Calu3 (cell line): ENCODE measurements at regions of chr6 and their contacts with region 1.

Region 1: DNA sequence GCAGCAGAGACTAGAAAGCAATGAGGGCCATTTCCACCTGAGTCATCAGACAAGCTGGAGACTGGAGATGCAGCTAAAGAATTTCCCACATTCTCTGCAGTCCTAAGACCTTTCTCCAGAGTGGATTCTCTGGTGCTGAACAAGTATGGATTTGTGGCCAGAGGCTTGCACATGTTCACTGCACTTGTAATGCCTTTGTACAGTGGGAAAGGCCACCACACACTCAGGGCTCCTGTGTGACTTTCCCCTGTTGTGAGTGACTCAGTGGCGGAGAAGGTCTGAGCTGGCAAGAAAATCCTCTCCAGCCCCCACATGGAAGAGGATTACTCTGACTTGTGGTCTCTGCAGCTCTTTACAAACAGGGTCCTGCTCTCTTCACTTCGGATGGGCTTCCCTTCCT is 192.3 kb downstream of the C6orf118 start:
- DNase-seq: no peak
- H3K4me3 Mint-ChIP-seq: no peak overlapping the region
- H3K27ac Mint-ChIP-seq: no peak overlapping the region
- H3K4me1 Mint-ChIP-seq: peaks cover 19% of the 10 kb centered on the region
- H3K27me3 Mint-ChIP-seq: no peaks in the 10 kb centered on the region
- CTCF ChIP-seq: no peak

Region 2: GRCh38 chr6:164856138-164856537 is 261.0 kb before region 1 on chr6:
- CTCF ChIA-PET with region 1: no interaction called
- intact Hi-C with region 1: no loop called
- DNase-seq: no peak
- H3K4me3 Mint-ChIP-seq: no peak overlapping the region
- H3K27ac Mint-ChIP-seq: no peak overlapping the region
- H3K4me1 Mint-ChIP-seq: no peaks in the 10 kb centered on the region
- H3K27me3 Mint-ChIP-seq: no peaks in the 10 kb centered on the region
- CTCF ChIP-seq: no peak

Region 3: DNA sequence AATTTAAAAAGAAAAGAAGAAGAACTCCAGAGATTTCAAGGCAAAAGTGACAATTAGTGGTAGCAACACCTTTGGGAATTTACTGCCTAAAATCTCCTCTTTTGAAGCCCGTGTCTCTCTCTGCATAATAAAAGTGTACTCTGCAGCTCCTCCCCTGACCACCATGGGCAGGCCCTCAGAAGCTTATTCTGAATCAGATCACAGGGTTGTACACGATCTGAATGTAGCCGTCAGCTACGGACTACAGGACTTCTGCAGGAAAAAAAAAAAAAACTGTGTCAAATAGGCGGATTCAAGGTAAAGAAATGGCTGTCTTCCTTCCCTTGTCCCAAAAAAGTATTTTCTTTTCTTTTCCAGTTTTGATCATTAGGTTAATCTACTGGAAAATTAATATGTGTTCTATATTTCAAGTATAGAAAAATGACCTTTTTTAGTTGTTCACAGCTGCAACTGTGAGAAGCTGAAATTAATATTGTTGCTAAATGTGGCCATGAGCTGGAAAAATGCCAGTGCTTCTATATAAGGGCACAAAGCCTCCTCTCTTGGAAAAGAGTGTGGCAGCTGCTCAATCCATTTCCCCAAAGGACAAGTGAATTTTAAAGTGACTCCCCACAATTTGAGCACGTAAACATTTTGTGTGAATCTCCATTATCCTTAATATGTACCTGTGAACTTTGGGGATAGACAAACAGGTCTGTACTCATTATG is 205.1 kb before region 1 on chr6:
- CTCF ChIA-PET with region 1: no interaction called
- intact Hi-C with region 1: no loop called
- DNase-seq: no peak
- H3K4me3 Mint-ChIP-seq: no peak overlapping the region
- H3K27ac Mint-ChIP-seq: no peak overlapping the region
- H3K4me1 Mint-ChIP-seq: no peaks in the 10 kb centered on the region
- H3K27me3 Mint-ChIP-seq: no peaks in the 10 kb centered on the region
- CTCF ChIP-seq: no peak

Region 4: GRCh38 chr6:165106261-165106660 is 10.9 kb before region 1 on chr6:
- CTCF ChIA-PET with region 1: interaction called, 10 read pairs
- intact Hi-C with region 1: no loop called
- DNase-seq: no peak
- H3K4me3 Mint-ChIP-seq: no peak overlapping the region
- H3K27ac Mint-ChIP-seq: no peak overlapping the region
- H3K4me1 Mint-ChIP-seq: no peaks in the 10 kb centered on the region
- H3K27me3 Mint-ChIP-seq: no peaks in the 10 kb centered on the region
- CTCF ChIP-seq: no peak